ENCODE measurements at regions of chr20 and their contacts with region 1.

Region 1: GRCh38 chr20:53915446-53916172 is 154.8 kb downstream of the BCAS1 start:
- DNase-seq: peak; percentile 96
- H3K27ac ChIP-seq: peak overlapping the region; percentile 81
- CTCF ChIP-seq: peak; percentile 99

Region 2: DNA sequence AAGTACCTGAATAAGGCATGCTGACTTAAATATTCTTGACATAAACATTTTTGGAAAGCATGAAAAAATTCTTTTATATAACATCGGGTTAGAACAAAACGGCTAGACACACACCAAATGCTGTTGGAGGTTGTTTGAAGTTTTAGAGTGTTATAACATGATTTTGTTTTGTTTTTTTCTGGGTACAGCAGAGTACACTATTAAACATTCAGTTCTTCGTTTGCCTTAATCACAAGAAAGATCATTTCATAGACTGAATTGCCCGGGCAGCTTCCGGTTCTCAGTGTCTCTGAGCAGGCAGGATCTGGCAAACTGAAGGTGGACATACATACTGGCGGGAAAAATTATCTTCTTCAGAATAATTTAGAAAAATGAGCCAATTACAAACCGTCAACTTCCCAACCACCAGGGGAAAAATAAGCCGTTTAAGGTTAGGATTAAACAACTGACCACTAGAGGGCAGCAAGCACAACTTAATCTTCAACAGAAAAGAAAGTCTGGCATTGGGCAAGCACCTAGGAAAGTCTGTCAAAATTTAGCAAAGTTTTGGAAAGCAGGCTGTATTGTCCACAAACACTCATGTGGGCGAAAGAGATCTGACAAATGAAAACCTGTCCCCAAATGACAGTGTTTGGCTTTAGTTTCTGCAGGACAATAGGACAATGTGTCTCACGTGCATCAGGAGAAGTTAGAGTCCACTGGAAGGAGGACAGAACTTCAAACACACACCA is 337.0 kb before region 1 on chr20:
- CTCF ChIA-PET with region 1: interaction called, 11 read pairs
- POLR2A ChIA-PET with region 1: no interaction called
- DNase-seq: peak; percentile 94
- H3K27ac ChIP-seq: no peak overlapping the region
- CTCF ChIP-seq: peak; percentile 90

Region 3: GRCh38 chr20:53865901-53866794 is 49.5 kb before region 1 on chr20:
- CTCF ChIA-PET with region 1: interaction called, 11 read pairs
- POLR2A ChIA-PET with region 1: no interaction called
- DNase-seq: peak; percentile 34
- H3K27ac ChIP-seq: peak overlapping the region; percentile 46; the same call in 1 of the 2 replicates
- CTCF ChIP-seq: no peak

Region 4: DNA sequence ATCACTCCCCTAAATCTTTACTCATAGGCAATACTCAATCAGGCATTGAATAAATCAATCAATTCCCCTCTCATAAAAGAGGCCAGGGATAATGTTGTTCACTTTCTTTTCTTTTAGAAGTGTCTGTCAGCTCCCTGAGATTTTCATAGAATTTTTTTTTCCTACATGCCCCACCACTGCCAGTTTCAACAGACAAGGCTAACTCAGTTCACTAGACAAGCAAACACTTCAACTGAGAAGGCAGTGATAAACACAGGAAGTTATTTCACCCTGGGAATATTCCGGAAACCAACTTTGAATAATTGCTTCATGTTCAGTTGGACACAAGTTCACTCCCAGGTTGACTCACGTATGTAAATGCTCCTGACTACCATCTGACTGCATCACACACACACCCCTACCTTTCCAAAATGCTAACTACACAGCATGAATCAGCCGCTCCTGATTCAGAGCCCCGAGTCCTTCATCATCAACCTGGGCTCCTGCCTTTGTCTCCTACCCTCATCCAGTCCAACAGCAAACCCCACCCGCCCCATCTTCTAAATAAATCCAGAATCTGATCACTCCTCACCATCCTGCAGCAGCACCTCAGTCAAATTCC is 10.9 kb after region 1 on chr20:
- CTCF ChIA-PET with region 1: interaction called, 10 read pairs
- POLR2A ChIA-PET with region 1: no interaction called
- DNase-seq: peak; percentile 99
- H3K27ac ChIP-seq: peak overlapping the region; percentile 80
- CTCF ChIP-seq: no peak

Measured in RWPE1 (cell line).